ENCODE measurements at regions of chr2 and their contacts with region 1.

Region 1: DNA sequence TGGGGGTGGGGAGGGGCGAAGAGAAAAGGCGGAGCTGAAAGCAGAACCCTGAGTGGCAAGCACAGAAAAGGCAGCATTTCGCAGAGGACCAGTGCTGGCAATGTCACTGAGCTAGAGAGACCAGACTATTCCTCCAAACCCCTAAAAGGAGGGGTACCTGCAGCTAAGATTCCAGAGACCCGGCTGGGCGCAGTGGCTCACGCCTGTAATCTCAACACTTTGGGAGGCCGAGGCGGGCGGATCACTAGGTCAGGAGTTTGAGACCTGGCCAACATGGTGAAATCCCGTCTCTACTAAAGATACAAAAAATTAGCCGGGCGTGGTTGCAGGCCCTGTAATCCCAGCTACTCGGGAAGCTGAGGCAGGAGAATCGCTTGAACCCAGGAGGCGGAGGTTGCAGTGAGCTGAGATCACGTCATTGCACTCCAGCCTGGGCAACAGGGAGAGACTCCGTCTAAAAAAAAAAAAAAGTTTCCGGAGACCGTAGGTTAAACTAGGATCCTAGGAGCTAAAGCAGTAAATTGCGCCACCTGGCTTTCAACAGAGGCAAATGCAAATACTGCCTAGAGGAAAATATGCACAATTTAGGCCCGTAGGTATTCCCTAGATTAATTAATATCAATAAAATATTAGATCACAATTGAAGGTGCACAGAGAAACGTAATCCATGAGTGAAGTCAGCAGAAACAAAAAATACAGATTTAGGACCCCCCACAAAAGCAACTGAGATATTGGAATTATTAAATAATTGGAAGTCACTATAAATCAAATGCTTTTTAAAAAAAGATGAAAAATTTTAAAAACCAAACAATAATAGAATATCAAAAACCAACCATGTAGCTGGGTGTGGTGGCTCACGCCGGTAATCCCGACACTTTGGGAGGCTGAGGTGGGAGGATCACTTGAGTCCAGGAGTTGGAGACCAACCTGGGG is 4.9 kb downstream of the UCN start:
- DNase-seq: peak; percentile 85
- H3K4me3 ChIP-seq: peak overlapping the region; percentile 37
- H3K27ac ChIP-seq: peak overlapping the region; percentile 17
- H3K4me1 ChIP-seq: peaks cover 15% of the 10 kb centered on the region
- H3K27me3 ChIP-seq: peaks cover 22% of the 10 kb centered on the region
- CTCF ChIP-seq: peak; percentile 88

Region 2: GRCh38 chr2:25912851-25913695 is 1390.3 kb before region 1 on chr2:
- CTCF ChIA-PET with region 1: no interaction called
- POLR2A ChIA-PET with region 1: no interaction called
- intact Hi-C with region 1: no loop called
- DNase-seq: peak; percentile 51
- H3K4me3 ChIP-seq: no peak overlapping the region
- H3K27ac ChIP-seq: peak overlapping the region; percentile 7
- H3K4me1 ChIP-seq: peaks cover 11% of the 10 kb centered on the region
- H3K27me3 ChIP-seq: no peaks in the 10 kb centered on the region
- CTCF ChIP-seq: no peak

Region 3: GRCh38 chr2:27095745-27096651 is 207.4 kb before region 1 on chr2:
- CTCF ChIA-PET with region 1: no interaction called
- POLR2A ChIA-PET with region 1: no interaction called
- intact Hi-C with region 1: loop called (anchors 5 kb)
- DNase-seq: peak; percentile 73
- H3K4me3 ChIP-seq: peak overlapping the region; percentile 10
- H3K27ac ChIP-seq: no peak overlapping the region
- H3K4me1 ChIP-seq: no peaks in the 10 kb centered on the region
- H3K27me3 ChIP-seq: no peaks in the 10 kb centered on the region
- CTCF ChIP-seq: no peak

Region 4: GRCh38 chr2:27271631-27272340 is 31.6 kb before region 1 on chr2:
- CTCF ChIA-PET with region 1: interaction called, 5 read pairs
- POLR2A ChIA-PET with region 1: interaction called, 17 read pairs
- intact Hi-C with region 1: no loop called
- DNase-seq: no peak
- H3K4me3 ChIP-seq: no peak overlapping the region
- H3K27ac ChIP-seq: no peak overlapping the region
- H3K4me1 ChIP-seq: no peaks in the 10 kb centered on the region
- H3K27me3 ChIP-seq: no peaks in the 10 kb centered on the region
- CTCF ChIP-seq: no peak

Region 5: GRCh38 chr2:27291865-27292264 is 11.5 kb before region 1 on chr2:
- CTCF ChIA-PET with region 1: interaction called, 16 read pairs
- POLR2A ChIA-PET with region 1: no interaction called
- intact Hi-C with region 1: no loop called
- DNase-seq: no peak
- H3K4me3 ChIP-seq: no peak overlapping the region
- H3K27ac ChIP-seq: no peak overlapping the region
- H3K4me1 ChIP-seq: peaks cover 16% of the 10 kb centered on the region
- H3K27me3 ChIP-seq: no peaks in the 10 kb centered on the region
- CTCF ChIP-seq: no peak; the same call in 1 of the 2 replicates

Measured in A673 (cell line).